PC-3 (cell line): ENCODE measurements at regions of chr12 and their contacts with region 1.

Region 1: GRCh38 chr12:16939871-16940306 is 333.9 kb upstream of the LMO3 start:
- DNase-seq: peak; percentile 81
- ATAC-seq: peak; percentile 65
- H3K4me3 ChIP-seq: no peak overlapping the region
- H3K27ac ChIP-seq: no peak overlapping the region
- H3K4me1 ChIP-seq: no peaks in the 10 kb centered on the region
- H3K27me3 ChIP-seq: no peaks in the 10 kb centered on the region
- CTCF ChIP-seq: peak; percentile 96

Region 2: DNA sequence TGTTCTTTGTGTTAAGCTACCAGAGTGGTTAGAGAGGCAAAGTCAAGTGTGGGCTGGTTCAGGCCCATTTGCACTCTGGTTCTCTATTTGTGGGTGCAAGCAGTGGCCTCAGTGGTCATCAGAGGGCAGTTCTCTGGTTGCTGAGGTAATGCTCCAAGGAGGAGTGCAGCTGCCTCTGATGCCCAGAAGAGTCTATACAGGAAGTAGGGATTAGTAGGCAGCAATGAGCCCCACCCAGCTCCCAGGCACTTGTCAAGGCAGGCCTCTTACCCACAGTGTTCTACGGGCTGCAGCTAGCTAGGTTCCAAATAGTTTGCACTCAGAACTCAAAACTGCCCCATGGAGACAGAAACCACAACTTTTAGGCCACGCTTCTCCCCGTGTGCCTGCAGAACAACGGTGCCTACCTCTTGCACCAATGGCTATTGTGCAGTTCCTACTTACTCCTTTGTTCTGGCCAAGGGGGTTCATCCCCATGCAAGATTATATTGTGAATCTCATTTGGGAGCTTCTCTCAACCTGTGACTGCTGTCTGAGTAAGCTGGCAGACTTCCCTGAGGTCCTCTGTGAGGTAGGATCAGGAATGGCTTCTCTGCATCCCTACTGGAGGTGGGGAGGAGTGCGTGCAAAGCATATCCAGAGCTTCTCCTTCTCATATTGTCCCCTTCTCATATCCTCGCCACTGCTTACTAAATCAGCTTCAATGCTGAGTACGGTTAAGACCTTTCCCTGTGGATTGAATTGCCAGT is 76.4 kb after region 1 on chr12:
- CTCF ChIA-PET with region 1: no interaction called
- POLR2A ChIA-PET with region 1: no interaction called
- intact Hi-C with region 1: loop called (anchors 5 kb)
- DNase-seq: peak; percentile 80
- ATAC-seq: peak; percentile 63
- H3K4me3 ChIP-seq: peak overlapping the region; percentile 25; the same call in 1 of the 2 replicates
- H3K27ac ChIP-seq: peak overlapping the region; percentile 94
- H3K4me1 ChIP-seq: peaks cover 30% of the 10 kb centered on the region
- H3K27me3 ChIP-seq: no peaks in the 10 kb centered on the region
- CTCF ChIP-seq: no peak